ENCODE measurements at regions of chr11 and their contacts with region 1.

Region 1: DNA sequence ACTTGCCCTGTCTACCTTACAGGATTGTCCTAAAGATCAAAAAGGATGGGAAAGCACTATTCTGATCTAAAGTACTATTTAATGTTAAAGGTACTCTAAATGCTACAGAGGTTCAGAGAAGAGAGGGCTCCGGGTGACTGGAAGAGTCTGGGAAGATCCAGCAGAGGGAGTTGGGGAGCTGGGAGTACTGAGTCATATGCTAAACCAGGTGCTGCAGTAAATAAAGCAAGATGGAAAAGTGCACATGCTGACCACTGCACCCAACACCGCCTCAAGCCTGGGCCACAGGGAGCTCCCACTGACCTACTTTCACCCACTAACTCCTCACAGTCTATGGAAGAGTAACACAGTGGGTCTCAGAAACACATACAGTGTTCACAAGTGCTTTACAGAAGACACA is 49.3 kb downstream of the WT1 start:
- DNase-seq: no peak

Region 2: DNA sequence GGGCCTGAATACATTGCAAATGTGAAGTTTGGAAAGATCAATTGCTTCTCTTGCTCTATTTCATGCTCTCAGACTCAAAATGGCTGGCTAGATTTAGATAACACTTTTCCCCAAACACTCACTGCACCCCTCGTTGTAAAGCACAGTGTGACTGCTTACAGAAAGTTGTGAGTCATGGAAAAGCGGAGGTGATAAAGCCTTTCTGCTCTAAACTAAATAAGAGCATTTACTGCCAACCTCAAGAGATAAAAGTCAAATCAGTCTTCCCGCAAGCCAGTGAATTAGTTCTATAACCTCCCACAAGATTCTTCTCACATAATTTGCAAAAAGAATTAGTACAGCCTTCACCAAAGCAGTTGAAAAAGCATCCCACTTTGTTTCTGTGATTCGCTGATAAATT is 119.4 kb before region 1 on chr11:
- intact Hi-C with region 1: no loop called
- DNase-seq: no peak

Region 3: GRCh38 chr11:32583459-32584271 is 197.7 kb after region 1 on chr11 and contains the start of gene EIF3M:
- intact Hi-C with region 1: loop called (anchors 10 kb)
- DNase-seq: peak; percentile 98
- total RNA-seq, gene EIF3M: 137 TPM

Region 4: GRCh38 chr11:32809313-32809712 is 423.3 kb after region 1 on chr11:
- intact Hi-C with region 1: no loop called
- DNase-seq: peak; percentile 82

Measured in cardiac septum (tissue), 1 donor.